Dorsolateral prefrontal cortex (tissue), 120 donors: ENCODE measurements at regions of chr2 and their contacts with region 1.

Region 1: GRCh38 chr2:31957354-31958139 is 53.3 kb downstream of the MEMO1 start:
- DNase-seq: no peak
- H3K4me3 ChIP-seq: peak overlapping the region in 3 of 59 donors; percentile 9 to 27 (median 14)
- H3K27ac ChIP-seq: peak overlapping the region in 1 of 59 donors; percentile 67
- H3K27me3 ChIP-seq: no peaks in the 10 kb centered on the region
- CTCF ChIP-seq: no peak

Region 2: GRCh38 chr2:31980674-31981356 is 23.3 kb after region 1 on chr2:
- intact Hi-C with region 1: loop called in 1 of 2 experiments (anchors 1 kb)
- DNase-seq: no peak
- H3K4me3 ChIP-seq: no peak overlapping the region
- H3K27ac ChIP-seq: no peak overlapping the region
- H3K27me3 ChIP-seq: no peaks in the 10 kb centered on the region
- CTCF ChIP-seq: no peak

Region 3: DNA sequence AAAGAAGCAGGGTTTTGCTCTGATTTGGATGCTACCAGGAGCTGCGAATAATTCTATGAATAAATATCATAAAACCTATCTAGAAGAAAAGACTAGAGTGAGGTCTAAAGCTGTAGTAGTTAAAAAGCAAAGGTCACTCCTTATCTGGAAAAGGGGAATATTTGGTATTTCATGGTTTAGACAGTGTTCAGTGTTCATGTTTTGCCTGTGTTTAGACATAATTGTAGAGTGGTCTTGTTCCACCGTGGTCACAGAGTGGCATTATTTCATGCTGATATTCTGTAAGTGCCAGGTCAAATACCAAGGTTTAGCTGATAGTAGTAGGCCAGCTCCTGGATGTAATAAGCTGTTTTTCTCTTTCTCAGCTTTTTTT is 116.6 kb after region 1 on chr2:
- intact Hi-C with region 1: no loop called
- DNase-seq: no peak
- H3K4me3 ChIP-seq: no peak overlapping the region
- H3K27ac ChIP-seq: no peak overlapping the region
- H3K27me3 ChIP-seq: no peaks in the 10 kb centered on the region
- CTCF ChIP-seq: no peak